Endothelial cell of umbilical vein (primary cell): ENCODE measurements at regions of chr3 and their contacts with region 1.

Region 1: DNA sequence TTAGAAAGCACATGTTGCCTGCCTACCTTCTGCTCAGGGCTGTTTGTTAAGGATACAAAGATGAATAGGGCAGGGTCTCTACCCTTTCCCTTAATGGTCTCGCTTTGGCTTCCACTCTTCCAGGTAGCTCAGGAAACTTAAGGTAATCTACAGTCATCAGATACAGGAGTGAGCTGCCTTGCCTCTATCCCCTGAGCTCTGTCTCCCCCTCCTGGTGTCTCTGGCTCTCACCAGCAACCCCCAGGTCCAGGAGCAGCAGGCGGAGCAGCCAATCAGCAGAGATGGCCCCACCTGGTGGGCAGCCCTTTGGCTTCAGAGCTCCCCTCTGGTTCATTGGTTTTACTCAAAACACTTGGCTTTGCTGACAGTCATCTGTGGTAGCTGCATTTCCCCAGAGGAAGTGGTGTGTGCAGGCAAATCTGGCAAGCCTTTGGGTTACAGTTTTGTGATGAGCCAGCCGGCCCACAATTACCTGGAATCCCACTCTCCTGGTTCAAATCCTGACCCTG is 8.5 kb upstream of the CX3CR1 start:
- DNase-seq: peak; percentile 79
- H3K4me3 ChIP-seq: no peak overlapping the region
- H3K27ac ChIP-seq: no peak overlapping the region
- H3K4me1 ChIP-seq: peaks cover 5% of the 10 kb centered on the region
- H3K27me3 ChIP-seq: peaks cover 0 to 1% of the 10 kb centered on the region in 2 experiments
- CTCF ChIP-seq: peak; percentile 93 to 95
- POLR2A ChIP-seq: no peak

Region 2: GRCh38 chr3:39000008-39000450 is 288.3 kb before region 1 on chr3:
- CTCF ChIA-PET with region 1: interaction called, 13 read pairs
- POLR2A ChIA-PET with region 1: no interaction called
- dilution Hi-C with region 1: no loop called
- intact Hi-C with region 1: no loop called
- DNase-seq: peak; percentile 70
- H3K4me3 ChIP-seq: no peak overlapping the region
- H3K27ac ChIP-seq: no peak overlapping the region
- H3K4me1 ChIP-seq: no peaks in the 10 kb centered on the region
- H3K27me3 ChIP-seq: no peaks in the 10 kb centered on the region
- CTCF ChIP-seq: peak; percentile 62 to 71
- POLR2A ChIP-seq: no peak

Region 3: GRCh38 chr3:39086144-39086543 is 202.2 kb before region 1 on chr3:
- CTCF ChIA-PET with region 1: interaction called, 22 read pairs
- POLR2A ChIA-PET with region 1: no interaction called
- dilution Hi-C with region 1: no loop called
- intact Hi-C with region 1: no loop called
- DNase-seq: no peak
- H3K4me3 ChIP-seq: no peak overlapping the region
- H3K27ac ChIP-seq: no peak overlapping the region
- H3K4me1 ChIP-seq: no peaks in the 10 kb centered on the region
- H3K27me3 ChIP-seq: no peaks in the 10 kb centered on the region
- CTCF ChIP-seq: no peak
- POLR2A ChIP-seq: no peak

Region 4: DNA sequence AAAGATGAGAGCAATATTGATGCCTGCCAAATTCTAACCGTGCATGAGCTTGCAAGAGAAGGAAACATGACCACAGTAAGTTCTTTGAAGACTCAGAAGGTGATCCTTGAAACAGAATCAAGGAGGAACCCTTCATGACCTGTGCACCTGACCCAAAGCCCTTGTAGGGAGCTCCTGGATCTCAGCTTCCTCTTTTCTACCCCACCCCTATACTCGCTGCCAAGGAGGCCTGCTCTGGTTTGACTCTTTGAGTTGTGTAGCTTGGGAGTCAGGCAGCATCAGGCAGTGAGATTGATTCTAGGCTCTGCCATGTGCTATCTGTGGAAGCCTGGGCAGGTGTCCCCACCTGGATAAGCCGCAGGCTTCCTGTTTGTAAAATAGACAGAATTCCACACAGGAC is 170.3 kb before region 1 on chr3:
- CTCF ChIA-PET with region 1: interaction called, 449 read pairs
- POLR2A ChIA-PET with region 1: no interaction called
- dilution Hi-C with region 1: no loop called
- intact Hi-C with region 1: no loop called
- DNase-seq: no peak
- H3K4me3 ChIP-seq: no peak overlapping the region
- H3K27ac ChIP-seq: no peak overlapping the region
- H3K4me1 ChIP-seq: no peaks in the 10 kb centered on the region
- H3K27me3 ChIP-seq: no peaks in the 10 kb centered on the region
- CTCF ChIP-seq: no peak
- POLR2A ChIP-seq: no peak

Region 5: GRCh38 chr3:39177708-39178332 is 110.5 kb before region 1 on chr3:
- CTCF ChIA-PET with region 1: interaction called, 15 read pairs
- POLR2A ChIA-PET with region 1: no interaction called
- dilution Hi-C with region 1: no loop called
- intact Hi-C with region 1: no loop called
- DNase-seq: peak; percentile 95
- H3K4me3 ChIP-seq: peak overlapping the region in 2 of 3 experiments; percentile 41 to 55
- H3K27ac ChIP-seq: peak overlapping the region; percentile 96
- H3K4me1 ChIP-seq: peaks cover 25% of the 10 kb centered on the region
- H3K27me3 ChIP-seq: no peaks in the 10 kb centered on the region
- CTCF ChIP-seq: no peak
- POLR2A ChIP-seq: peak; percentile 37

Region 6: DNA sequence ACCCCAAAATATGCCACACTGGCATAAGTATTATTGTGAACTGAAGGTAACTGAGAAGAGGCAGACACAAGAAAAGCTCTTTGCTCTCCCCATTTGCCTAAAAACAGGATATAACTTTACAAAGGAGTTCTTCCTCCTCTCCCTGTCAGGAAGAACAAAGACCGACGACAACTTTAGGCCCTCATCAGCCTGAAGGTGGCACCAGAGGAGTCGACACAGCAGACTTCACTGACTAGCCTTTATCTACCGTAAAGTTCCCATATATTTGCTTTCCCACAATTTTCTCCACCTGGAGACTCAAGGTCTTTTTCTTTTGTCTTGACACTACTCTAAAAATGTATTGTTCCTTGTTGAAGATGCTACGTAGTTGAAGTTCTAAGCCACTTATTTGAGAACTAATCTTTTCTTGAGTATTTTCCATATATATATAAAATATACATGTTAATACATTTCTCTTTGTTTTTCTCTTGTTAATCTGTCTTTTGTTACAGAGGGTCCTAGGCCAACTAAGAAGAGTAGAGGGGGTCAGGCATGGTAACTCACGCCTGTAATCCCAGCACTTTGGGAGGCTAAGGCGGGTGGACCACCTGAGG is 79.8 kb before region 1 on chr3:
- CTCF ChIA-PET with region 1: interaction called, 14 read pairs
- POLR2A ChIA-PET with region 1: no interaction called
- dilution Hi-C with region 1: no loop called
- intact Hi-C with region 1: loop called (anchors 1 kb)
- DNase-seq: peak; percentile 73
- H3K4me3 ChIP-seq: no peak overlapping the region
- H3K27ac ChIP-seq: no peak overlapping the region
- H3K4me1 ChIP-seq: no peaks in the 10 kb centered on the region
- H3K27me3 ChIP-seq: peaks cover 6 to 19% of the 10 kb centered on the region in 2 experiments
- CTCF ChIP-seq: peak; percentile 62 to 73
- POLR2A ChIP-seq: no peak

Region 7: GRCh38 chr3:39378088-39378487 is 89.7 kb after region 1 on chr3:
- CTCF ChIA-PET with region 1: interaction called, 15 read pairs
- POLR2A ChIA-PET with region 1: no interaction called
- dilution Hi-C with region 1: no loop called
- intact Hi-C with region 1: loop called (anchors 1 kb)
- DNase-seq: peak; percentile 38
- H3K4me3 ChIP-seq: no peak overlapping the region
- H3K27ac ChIP-seq: no peak overlapping the region
- H3K4me1 ChIP-seq: peaks cover 18% of the 10 kb centered on the region
- H3K27me3 ChIP-seq: peaks cover 0 to 2% of the 10 kb centered on the region in 2 experiments
- CTCF ChIP-seq: peak; percentile 69 to 77
- POLR2A ChIP-seq: no peak